Activated CD4-positive, alpha-beta T cell treated with anti-CD3 and anti-CD28 coated beads for 36 hours (primary cell): ENCODE measurements at regions of chr6 and their contacts with region 1.

Region 1: DNA sequence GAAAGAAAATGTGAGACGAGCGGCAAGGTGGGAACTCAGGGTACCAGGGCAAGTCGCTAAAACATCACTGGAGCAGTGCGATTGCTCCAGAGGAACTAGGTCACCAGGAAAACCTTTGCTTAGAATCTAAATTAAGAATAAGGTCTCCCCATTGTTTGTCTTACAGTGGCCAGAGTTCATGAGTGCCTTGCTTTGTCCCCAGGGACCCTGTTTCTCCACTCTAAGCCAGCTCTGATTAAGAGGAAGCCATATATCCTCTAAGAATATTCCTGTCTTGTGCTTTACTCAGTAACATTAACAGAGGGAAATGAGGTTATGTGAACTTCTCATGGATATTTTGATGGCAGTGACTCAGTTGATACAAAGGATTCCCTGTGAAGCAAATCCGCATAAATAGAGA is 305.8 kb downstream of the CD83 start:
- DNase-seq: no peak
- ATAC-seq: no peak
- H3K4me3 Mint-ChIP-seq: no peak overlapping the region
- H3K27ac Mint-ChIP-seq: peak overlapping the region; percentile 96
- H3K4me1 Mint-ChIP-seq: peaks cover 54% of the 10 kb centered on the region
- H3K27me3 Mint-ChIP-seq: no peaks in the 10 kb centered on the region

Region 2: DNA sequence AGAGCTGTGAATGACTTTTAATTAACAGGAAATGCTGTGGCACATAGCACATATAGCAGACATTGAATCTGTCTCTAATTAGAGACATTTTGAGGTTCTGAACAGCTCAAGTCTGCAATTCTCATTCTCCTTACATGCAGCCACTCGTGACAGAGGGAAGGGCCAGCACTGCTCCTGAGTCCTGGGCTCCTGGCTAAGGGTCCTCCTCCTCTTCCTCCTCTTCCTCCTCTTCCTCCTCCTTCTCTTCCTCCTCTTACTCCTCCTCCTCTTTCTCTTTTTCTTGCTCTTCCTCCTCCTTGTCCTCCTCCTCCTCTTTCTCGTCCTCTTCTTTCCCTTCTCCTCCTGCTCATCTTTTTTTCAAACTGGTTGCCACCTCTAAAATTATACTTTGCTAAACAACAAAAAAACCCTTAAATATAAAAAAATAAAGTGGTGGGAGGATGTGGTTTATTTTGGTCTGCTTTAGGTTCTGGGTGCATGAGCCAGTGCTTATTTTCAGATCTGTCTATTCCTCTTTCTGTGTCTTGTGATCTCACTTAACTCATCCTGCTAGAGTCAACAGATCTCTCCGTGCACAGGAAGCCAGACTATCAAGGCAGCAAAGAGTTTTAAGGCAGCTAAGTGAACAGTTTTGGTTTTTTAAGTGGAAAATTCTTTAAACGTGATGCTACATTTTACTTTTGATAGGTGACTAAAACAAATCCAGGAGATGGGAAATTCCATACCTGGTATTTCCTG is 146.5 kb before region 1 on chr6:
- CTCF ChIA-PET with region 1: no interaction called
- POLR2A ChIA-PET with region 1: no interaction called
- intact Hi-C with region 1: loop called in 1 of 2 experiments (anchors 10 kb)
- DNase-seq: peak; percentile 39
- ATAC-seq: peak; percentile 92
- H3K4me3 Mint-ChIP-seq: peak overlapping the region; percentile 25
- H3K27ac Mint-ChIP-seq: peak overlapping the region; percentile 96
- H3K4me1 Mint-ChIP-seq: peaks cover 50% of the 10 kb centered on the region
- H3K27me3 Mint-ChIP-seq: no peaks in the 10 kb centered on the region

Region 3: DNA sequence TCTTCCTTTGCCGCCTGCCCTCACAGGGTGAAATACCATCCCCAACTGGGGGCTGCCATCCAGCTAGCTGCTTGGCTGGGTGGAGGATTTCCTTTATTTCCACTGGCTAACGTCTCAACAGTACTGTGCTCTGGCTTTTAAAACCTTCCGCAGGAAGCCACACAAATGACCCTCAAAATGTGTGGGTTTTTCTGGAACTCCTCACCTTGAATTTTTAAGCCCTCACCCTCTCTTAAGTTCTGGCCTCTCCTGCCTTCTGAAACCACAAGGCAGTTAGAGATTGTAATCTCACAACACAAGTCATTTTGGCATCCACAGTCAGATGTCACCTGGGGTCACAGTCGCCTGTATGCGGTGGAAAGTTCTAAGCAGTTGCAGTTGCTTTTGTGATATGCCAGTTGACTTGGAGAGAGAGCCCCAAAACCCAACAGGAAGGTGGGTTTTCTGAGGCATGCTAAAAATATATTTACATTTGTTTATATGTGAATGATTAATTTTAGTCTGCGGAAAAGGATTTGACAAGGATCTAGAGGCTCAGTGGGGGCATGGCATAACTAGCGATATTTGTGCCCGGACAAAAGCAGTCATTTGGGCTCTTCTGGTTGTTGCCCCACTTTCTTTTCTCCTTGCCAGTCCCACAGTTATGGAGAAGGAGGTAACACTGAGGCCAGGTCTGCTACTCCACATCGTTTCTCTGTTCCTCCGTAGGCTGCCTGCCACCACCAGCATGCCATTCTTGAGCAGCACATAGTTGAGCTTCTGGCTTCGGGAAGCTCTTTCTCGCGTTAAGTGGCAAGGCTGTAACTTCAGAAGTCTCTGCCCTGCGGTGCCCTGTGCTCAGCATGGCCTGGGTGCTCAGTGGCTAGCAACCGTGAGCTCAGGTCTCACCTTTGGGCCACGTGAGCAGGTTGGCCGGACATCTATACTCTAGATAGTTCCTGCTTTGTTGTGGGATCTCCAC is 29.5 kb after region 1 on chr6:
- CTCF ChIA-PET with region 1: interaction called, 3 read pairs
- POLR2A ChIA-PET with region 1: no interaction called
- intact Hi-C with region 1: loop called (anchors 1 kb)
- DNase-seq: peak; percentile 85
- ATAC-seq: peak; percentile 70
- H3K4me3 Mint-ChIP-seq: peak overlapping the region; percentile 26
- H3K27ac Mint-ChIP-seq: peak overlapping the region; percentile 83
- H3K4me1 Mint-ChIP-seq: peaks cover 89% of the 10 kb centered on the region
- H3K27me3 Mint-ChIP-seq: no peaks in the 10 kb centered on the region

Region 4: DNA sequence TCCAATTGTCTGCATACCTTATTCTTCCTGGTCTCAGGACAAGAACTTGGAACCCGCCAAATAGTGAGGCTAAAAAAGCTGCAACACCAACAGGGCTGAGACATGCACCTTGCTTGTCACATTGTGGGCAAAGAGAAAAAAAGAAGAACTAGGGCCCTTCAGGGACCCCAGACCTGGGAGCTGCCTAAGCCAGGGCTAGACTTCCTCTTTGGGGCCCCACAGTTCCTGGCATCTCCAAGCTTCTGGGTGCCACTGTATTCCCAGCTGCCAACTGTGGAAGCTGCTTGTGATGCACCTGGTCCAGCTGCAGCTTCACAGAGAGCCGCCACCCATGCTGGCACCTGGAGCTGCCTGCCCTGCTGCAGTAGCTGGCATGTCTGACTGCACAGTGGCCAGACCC is 64.8 kb after region 1 on chr6:
- CTCF ChIA-PET with region 1: no interaction called
- POLR2A ChIA-PET with region 1: no interaction called
- intact Hi-C with region 1: no loop called
- DNase-seq: no peak
- ATAC-seq: no peak
- H3K4me3 Mint-ChIP-seq: no peak overlapping the region
- H3K27ac Mint-ChIP-seq: no peak overlapping the region
- H3K4me1 Mint-ChIP-seq: peaks cover 1% of the 10 kb centered on the region
- H3K27me3 Mint-ChIP-seq: no peaks in the 10 kb centered on the region

Region 5: GRCh38 chr6:14596410-14596809 is 173.1 kb after region 1 on chr6:
- CTCF ChIA-PET with region 1: no interaction called
- POLR2A ChIA-PET with region 1: no interaction called
- intact Hi-C with region 1: loop called in 1 of 2 experiments (anchors 1 kb)
- DNase-seq: peak; percentile 35
- ATAC-seq: peak; percentile 63
- H3K4me3 Mint-ChIP-seq: no peak overlapping the region
- H3K27ac Mint-ChIP-seq: no peak overlapping the region
- H3K4me1 Mint-ChIP-seq: peaks cover 21% of the 10 kb centered on the region
- H3K27me3 Mint-ChIP-seq: no peaks in the 10 kb centered on the region

Region 6: GRCh38 chr6:14857501-14857900 is 434.2 kb after region 1 on chr6:
- CTCF ChIA-PET with region 1: no interaction called
- POLR2A ChIA-PET with region 1: no interaction called
- intact Hi-C with region 1: loop called in 1 of 2 experiments (anchors 5 kb)
- DNase-seq: peak; percentile 80
- ATAC-seq: peak; percentile 71
- H3K4me3 Mint-ChIP-seq: peak overlapping the region; percentile 7
- H3K27ac Mint-ChIP-seq: peak overlapping the region; percentile 95
- H3K4me1 Mint-ChIP-seq: peaks cover 48% of the 10 kb centered on the region
- H3K27me3 Mint-ChIP-seq: no peaks in the 10 kb centered on the region